CD14-positive monocyte (primary cell): ENCODE measurements at regions of chr1 and their contacts with region 1.

Region 1: GRCh38 chr1:27192039-27192529 is 37.2 kb upstream of the SLC9A1 start:
- DNase-seq: peak; percentile 66 to 76 (median 66)
- H3K4me3 ChIP-seq: no peak overlapping the region
- H3K4me3 Mint-ChIP-seq: peak overlapping the region; percentile 9 to 68
- H3K27ac ChIP-seq: no peak overlapping the region
- H3K27ac Mint-ChIP-seq: peak overlapping the region in 5 of 7 donors; percentile 75 to 90 (median 89)
- H3K4me1 ChIP-seq: peaks cover 14 to 18% of the 10 kb centered on the region in 2 donors
- H3K4me1 Mint-ChIP-seq: peaks cover 14% of the 10 kb centered on the region
- H3K27me3 ChIP-seq: no peaks in the 10 kb centered on the region
- H3K27me3 Mint-ChIP-seq: peaks cover 2 to 6% (median 2%) of the 10 kb centered on the region in 3 donors
- CTCF ChIP-seq: no peak

Region 2: GRCh38 chr1:27102707-27103491 is 89.2 kb before region 1 on chr1:
- intact Hi-C with region 1: loop called in 1 of 2 experiments (anchors 5 kb)
- DNase-seq: peak; percentile 65 to 73 (median 69)
- H3K4me3 ChIP-seq: no peak overlapping the region
- H3K4me3 Mint-ChIP-seq: no peak overlapping the region
- H3K27ac ChIP-seq: no peak overlapping the region
- H3K27ac Mint-ChIP-seq: peak overlapping the region in 4 of 7 donors; percentile 71 to 83 (median 75)
- H3K4me1 ChIP-seq: peaks cover 42 to 56% of the 10 kb centered on the region in 2 donors
- H3K4me1 Mint-ChIP-seq: peaks cover 45% of the 10 kb centered on the region
- H3K27me3 ChIP-seq: no peaks in the 10 kb centered on the region
- H3K27me3 Mint-ChIP-seq: peaks cover 0 to 9% (median 0%) of the 10 kb centered on the region in 3 donors
- CTCF ChIP-seq: peak; percentile 99

Region 3: GRCh38 chr1:27149762-27150113 is 42.3 kb before region 1 on chr1:
- intact Hi-C with region 1: no loop called
- DNase-seq: no peak
- H3K4me3 ChIP-seq: peak overlapping the region in 1 of 3 experiments; percentile 2
- H3K4me3 Mint-ChIP-seq: no peak overlapping the region
- H3K27ac ChIP-seq: peak overlapping the region; percentile 2 to 50
- H3K27ac Mint-ChIP-seq: peak overlapping the region in 6 of 7 donors; percentile 14 to 76 (median 46)
- H3K4me1 ChIP-seq: peaks cover 46 to 58% of the 10 kb centered on the region in 2 donors
- H3K4me1 Mint-ChIP-seq: peaks cover 59% of the 10 kb centered on the region
- H3K27me3 ChIP-seq: no peaks in the 10 kb centered on the region
- H3K27me3 Mint-ChIP-seq: peaks cover 0 to 2% (median 2%) of the 10 kb centered on the region in 3 donors
- CTCF ChIP-seq: no peak

Region 4: DNA sequence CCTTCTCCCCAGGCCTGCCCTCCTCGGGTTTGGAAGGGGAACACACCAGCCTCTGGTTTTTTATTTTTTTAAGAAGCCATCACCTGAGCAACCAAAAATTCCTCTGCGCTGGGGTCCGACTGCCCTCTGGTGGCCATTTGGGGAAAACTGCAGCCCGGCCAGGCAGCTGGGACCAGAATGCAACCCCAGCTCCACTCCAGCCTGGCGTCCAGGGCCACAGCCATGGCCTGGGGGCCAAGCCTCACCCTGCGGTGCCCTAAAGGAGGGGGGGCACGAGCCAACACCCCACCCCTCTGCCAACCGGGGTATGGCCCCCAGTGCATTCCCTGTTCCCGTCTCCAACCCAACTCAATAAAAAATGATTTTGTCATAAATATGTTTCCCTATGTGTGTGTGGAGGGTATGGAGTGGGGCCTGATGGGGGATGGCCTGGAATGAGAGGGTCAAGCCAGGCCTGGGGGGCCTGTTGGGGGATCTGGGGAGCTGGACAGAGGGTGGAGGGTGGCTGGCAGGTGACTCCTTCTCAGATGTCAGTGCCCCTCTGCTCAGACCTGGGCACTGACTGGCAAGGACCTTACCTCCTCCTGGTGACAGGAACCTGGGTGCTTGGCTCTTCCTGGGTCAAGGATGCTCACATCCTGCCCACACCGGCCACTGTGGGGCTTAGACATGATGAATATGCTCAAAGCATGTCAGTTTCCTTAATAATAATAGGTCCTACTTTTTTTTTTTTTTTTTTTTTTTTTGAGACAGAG is 203.5 kb after region 1 on chr1:
- intact Hi-C with region 1: no loop called
- DNase-seq: peak; percentile 67 to 76 (median 69)
- H3K4me3 ChIP-seq: no peak overlapping the region
- H3K4me3 Mint-ChIP-seq: no peak overlapping the region
- H3K27ac ChIP-seq: no peak overlapping the region
- H3K27ac Mint-ChIP-seq: peak overlapping the region in 1 of 7 donors; percentile 68
- H3K4me1 ChIP-seq: peaks cover 16 to 18% of the 10 kb centered on the region in 2 donors
- H3K4me1 Mint-ChIP-seq: peaks cover 16% of the 10 kb centered on the region
- H3K27me3 ChIP-seq: peaks cover 0 to 17% of the 10 kb centered on the region in 2 donors
- H3K27me3 Mint-ChIP-seq: peaks cover 13 to 25% (median 20%) of the 10 kb centered on the region in 3 donors
- CTCF ChIP-seq: peak; percentile 95

Region 5: DNA sequence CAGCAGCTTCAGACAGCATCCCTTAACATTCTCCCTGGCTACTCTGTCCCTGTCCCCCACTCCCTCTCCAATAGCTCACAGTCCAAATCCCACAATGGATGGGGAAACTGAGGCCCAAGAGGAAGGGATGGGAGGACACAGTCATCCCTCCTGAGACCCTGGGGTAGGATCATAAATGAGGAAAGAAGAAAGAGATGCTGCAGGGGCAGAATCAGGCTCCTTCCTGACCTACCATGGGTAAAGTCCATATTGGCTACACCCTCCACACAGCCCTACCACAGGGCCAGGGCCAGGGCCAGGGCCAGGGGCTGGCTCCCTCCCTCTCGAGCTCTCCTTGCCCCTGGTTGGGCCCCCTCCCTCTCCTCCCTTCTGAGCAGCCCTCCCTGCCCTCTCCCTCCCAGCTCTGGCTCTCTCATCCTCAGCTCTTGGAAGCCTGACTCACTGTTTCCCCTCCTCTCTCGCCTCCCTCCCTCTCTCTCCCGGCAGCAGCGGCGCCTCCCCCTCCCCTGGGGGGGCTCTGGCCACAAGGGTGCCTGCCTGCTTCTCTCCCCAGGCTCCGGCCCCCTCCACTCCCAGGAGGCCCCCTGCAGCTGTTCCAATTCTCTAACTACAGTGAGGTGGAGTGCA is 406.9 kb after region 1 on chr1:
- intact Hi-C with region 1: no loop called
- DNase-seq: peak in 1 of 3 donors; percentile 28
- H3K4me3 ChIP-seq: no peak overlapping the region
- H3K4me3 Mint-ChIP-seq: no peak overlapping the region
- H3K27ac ChIP-seq: no peak overlapping the region
- H3K27ac Mint-ChIP-seq: peak overlapping the region in 1 of 7 donors; percentile 54
- H3K4me1 ChIP-seq: peaks cover 28 to 35% of the 10 kb centered on the region in 2 donors
- H3K4me1 Mint-ChIP-seq: peaks cover 39% of the 10 kb centered on the region
- H3K27me3 ChIP-seq: peaks cover 0 to 4% of the 10 kb centered on the region in 2 donors
- H3K27me3 Mint-ChIP-seq: peaks cover 7 to 23% (median 8%) of the 10 kb centered on the region in 3 donors
- CTCF ChIP-seq: no peak